ENCODE measurements at regions of chr4 and their contacts with region 1.

Region 1: GRCh38 chr4:105878668-105879067 is 16.6 kb upstream of the NPNT start:
- DNase-seq: no peak
- ATAC-seq: peak in 3 of 8 donors; percentile 39 to 55 (median 48)
- H3K4me3 ChIP-seq: no peak overlapping the region
- H3K27ac ChIP-seq: peak overlapping the region in 1 of 10 donors; percentile 39
- H3K4me1 ChIP-seq: peaks cover 0 to 19% (median 5%) of the 10 kb centered on the region in 9 donors
- H3K27me3 ChIP-seq: no peaks in the 10 kb centered on the region
- CTCF ChIP-seq: no peak

Region 2: DNA sequence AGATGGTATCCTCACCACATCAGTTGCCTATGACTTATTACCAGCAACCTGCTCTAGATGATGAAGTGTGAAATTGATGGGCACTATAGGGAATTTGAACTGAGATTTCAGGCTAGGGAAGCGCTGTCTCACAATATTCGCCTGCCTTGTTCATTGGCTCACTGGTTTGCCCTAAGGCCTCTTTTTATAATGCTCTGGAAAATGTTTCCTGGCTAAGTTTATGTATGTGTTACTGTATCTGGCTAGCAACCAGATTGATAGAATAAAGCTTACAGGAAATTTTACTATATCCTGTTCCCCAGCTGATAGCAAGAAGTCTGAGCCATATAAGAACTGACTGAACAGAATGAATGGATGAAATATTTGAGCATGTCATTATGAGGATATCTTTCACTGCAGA is 98.5 kb before region 1 on chr4:
- intact Hi-C with region 1: loop called in 1 of 10 experiments (anchors 10 kb)
- DNase-seq: no peak
- ATAC-seq: no peak
- H3K4me3 ChIP-seq: no peak overlapping the region
- H3K27ac ChIP-seq: no peak overlapping the region
- H3K4me1 ChIP-seq: peaks cover 0 to 11% (median 0%) of the 10 kb centered on the region in 9 donors
- H3K27me3 ChIP-seq: no peaks in the 10 kb centered on the region
- CTCF ChIP-seq: no peak

Measured in heart right ventricle (tissue), 16 donors.